Endothelial cell of umbilical vein (primary cell): ENCODE measurements at regions of chr19 and their contacts with region 1.

Region 1: DNA sequence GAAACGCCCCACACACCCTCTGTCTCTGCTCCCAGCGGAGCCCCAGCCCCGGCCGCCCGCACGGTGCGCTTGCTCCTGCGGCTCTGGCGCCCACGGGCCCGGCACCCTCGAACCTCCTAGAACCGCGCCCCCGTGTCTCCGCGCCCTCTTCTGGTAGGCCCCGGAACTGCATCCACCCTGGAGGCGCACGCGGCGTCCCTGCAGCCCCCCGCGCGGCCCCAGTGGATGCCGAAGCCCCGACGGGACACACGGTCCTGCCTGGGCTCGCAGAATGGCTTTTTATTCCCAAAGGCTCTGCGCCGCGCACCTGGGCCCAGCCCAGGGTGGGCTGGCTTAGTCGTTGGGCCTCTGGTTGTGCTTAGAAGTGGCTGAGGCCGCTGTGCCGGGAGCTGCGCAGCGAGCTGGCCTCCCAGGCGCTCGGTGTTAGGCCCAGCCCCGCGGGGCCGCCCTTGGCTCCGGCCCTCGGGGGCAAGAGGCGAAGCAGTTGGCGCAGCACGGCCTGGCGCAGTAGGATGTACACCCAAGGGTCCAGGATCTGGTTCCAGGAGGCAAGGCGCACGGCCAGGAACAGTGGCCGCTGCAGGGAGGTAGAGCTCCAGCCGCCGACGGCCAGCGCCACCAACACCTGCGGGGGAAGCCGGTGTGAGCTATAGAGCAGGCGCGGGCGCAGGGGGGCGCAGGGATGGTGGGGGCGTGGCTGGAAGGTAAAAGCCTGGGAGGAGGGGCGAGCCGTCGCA is 2.8 kb downstream of the PTGER1 start:
- DNase-seq: peak; percentile 51
- H3K4me3 ChIP-seq: no peak overlapping the region
- H3K27ac ChIP-seq: no peak overlapping the region
- H3K4me1 ChIP-seq: peaks cover 24% of the 10 kb centered on the region
- H3K27me3 ChIP-seq: no peaks in the 10 kb centered on the region
- CTCF ChIP-seq: peak; percentile 96 to 97
- POLR2A ChIP-seq: no peak

Region 2: DNA sequence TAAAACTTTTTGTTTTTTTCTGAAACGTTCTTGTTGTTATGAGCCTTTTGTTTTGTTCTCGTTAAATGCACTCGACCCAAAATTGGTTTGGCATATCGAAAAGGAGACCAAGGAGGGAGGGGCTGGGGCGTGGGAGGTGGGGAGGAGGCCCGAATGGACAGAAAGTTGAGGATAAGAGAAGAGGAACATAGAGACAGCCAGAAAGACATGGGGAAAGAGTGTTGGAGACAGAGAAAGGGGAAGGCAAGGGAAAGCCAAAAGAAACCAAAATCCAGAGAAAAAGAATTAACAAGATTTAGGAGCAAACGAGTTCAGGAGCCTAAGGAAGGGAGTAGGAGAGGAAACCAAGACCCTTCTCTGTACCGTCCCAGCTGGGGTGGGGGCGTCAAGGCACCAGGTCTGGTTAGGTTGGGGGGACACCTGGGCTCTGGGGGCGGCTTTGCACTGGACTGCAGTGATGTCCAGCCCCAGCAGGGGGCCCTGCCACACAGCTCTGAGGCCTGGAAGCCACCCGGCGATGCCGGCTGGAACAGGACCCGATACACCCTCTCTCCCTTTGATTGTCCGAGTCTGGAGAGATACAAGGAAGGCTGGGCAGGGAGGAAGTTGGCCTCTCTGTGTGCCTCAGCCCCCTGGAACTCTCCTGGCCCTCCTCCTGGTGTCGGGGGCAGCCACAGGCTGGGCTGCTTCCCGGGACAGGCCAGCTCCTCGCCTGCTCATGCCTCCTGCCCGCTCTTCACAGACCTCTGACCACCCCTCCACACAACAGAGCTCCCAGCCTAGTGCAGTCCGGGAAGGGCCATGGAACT is 324.4 kb before region 1 on chr19:
- CTCF ChIA-PET with region 1: interaction called, 4 read pairs
- POLR2A ChIA-PET with region 1: no interaction called
- dilution Hi-C with region 1: no loop called
- intact Hi-C with region 1: loop called (anchors 5 kb)
- DNase-seq: peak; percentile 77
- H3K4me3 ChIP-seq: no peak overlapping the region
- H3K27ac ChIP-seq: peak overlapping the region; percentile 43
- H3K4me1 ChIP-seq: peaks cover 24% of the 10 kb centered on the region
- H3K27me3 ChIP-seq: no peaks in the 10 kb centered on the region
- CTCF ChIP-seq: peak; percentile 86 to 98
- POLR2A ChIP-seq: no peak

Region 3: DNA sequence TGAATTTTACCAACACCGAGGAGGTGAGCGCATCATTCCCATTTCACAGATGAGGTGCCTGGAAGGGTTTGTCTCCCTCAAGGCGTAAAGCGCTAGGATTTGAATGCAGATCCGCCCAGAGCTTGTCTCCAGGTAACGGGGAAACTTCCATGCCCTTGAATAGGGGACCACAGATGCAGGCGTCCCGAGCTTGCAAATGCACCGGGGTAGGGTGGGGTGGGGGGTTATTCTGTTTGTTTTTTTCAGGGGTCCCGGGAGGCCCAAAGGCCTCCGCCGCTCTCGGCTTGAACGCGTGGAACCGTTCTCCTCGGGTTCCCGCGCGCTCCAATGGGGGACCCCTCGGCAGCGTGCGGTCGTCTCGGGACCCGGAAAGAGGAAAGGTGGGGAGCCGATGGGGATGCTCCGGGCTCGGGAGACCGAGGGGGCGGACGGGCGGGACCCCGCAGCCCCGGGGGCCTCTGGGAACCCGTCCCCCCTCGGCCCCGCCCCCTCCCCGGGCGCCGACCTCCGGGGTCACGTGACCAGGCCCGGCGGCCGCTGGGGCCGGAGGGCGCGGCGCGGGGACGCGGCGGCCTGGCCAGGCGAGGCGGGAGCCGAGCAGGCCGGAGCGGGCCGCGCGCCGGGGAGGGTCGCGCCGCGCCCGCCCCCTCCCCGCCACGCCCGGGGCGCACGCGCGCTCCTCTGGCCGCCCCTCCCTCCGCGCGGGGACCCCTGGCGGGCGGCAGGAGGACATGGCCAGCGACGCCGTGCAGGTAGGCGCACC is 39.4 kb before region 1 on chr19 and contains the start of gene PKN1:
- CTCF ChIA-PET with region 1: interaction called, 23 read pairs
- POLR2A ChIA-PET with region 1: no interaction called
- dilution Hi-C with region 1: no loop called
- intact Hi-C with region 1: loop called (anchors 1 kb)
- DNase-seq: peak; percentile 21
- H3K4me3 ChIP-seq: peak within 1 kb of the TSS; percentile 43 to 84 (median 79)
- H3K27ac ChIP-seq: peak within 1 kb of the TSS; percentile 78
- H3K4me1 ChIP-seq: peaks cover 27% of the 10 kb centered on the region
- H3K27me3 ChIP-seq: peaks cover 0 to 2% of the 10 kb centered on the region in 2 experiments
- CTCF ChIP-seq: no peak
- POLR2A ChIP-seq: peak; percentile 18
- total RNA-seq, gene PKN1: 302 and 326 TPM in 2 replicates

Region 4: DNA sequence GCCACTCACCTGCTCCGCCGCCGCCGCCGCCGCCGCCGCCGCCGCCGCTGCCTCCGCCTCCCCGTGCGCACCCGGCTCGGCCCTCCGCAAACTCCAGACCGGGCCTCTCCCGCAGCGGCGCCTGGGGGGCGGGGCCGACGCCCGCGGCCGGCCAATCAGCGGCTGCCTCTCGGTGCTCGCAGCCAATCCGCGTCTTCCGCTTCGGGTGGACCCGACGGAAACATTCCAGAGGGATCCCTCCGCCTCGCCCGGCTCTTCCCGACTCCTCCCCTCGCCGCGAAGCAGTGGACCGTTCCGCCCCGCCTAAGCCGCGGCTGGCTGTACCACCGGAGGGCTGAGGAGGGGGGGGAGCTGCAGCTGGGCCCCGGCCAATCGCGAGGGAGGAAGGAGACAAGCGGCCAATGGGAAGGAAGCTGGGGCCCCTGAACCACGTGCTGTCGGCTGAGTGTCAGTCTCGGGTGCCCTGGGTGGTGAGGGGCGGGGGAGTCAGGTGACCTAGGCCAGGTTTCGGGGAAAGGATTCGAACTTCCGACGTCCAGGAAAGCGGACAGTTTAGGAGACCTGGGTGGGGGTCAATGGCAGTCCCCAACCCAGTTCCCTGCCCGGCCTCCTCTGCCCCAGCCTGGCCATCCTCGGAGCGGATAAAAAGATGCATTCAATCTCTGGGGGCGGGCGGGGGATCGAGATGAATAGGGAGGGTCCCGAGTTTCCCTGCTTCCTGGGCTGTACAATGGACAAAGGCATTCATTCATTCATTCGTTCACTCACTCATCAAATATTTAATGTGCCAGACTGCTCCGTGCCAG is 23.9 kb after region 1 on chr19 and contains the start of gene GIPC1:
- CTCF ChIA-PET with region 1: interaction called, 13 read pairs
- POLR2A ChIA-PET with region 1: no interaction called
- dilution Hi-C with region 1: no loop called
- intact Hi-C with region 1: no loop called
- DNase-seq: peak; percentile 99
- H3K4me3 ChIP-seq: peak within 1 kb of the TSS; percentile 50 to 95 (median 68)
- H3K27ac ChIP-seq: no peak within 1 kb of the TSS
- H3K4me1 ChIP-seq: peaks cover 23% of the 10 kb centered on the region
- H3K27me3 ChIP-seq: no peaks in the 10 kb centered on the region
- CTCF ChIP-seq: no peak
- POLR2A ChIP-seq: no peak
- total RNA-seq, gene GIPC1: 102 and 108 TPM in 2 replicates